ENCODE measurements at regions of chr2 and their contacts with region 1.

Region 1: DNA sequence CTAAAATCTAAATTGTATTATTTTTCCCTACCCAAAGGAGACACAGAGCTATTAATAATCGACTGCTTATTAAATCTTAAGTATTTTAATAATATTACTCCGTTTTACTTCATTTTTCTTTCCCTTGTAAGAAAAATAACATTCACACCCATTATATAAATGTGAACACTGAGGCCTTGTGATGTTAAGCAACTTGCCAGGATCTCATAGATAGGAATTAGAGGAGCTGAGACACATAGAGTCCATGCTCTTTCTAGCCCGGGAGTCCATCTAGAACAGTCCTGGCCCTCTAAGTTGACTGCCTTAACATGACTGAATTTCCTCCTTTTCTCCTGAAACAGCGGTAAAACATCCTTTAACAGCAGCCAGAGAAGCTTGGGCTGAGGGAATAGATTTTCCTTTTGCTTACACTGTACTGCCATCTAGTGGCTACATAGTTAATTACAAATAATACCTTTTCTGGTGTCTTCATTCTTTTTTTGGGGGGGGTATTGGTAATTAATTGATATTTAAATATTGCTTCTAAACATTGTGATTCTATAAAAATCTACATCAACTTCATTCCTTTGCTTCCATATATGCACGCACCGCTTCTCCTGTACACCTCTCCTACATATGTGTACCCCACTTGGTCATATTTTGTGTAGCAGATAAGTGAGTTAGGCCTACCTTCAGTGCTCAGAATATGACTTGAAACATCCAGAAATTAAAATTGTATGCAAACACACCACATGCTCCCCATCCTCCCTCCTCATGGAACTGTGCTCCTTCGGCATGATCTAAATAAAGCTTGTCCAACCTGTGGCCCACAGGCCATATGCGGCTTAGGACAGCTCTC is 125.8 kb upstream of the HNMT start:
- DNase-seq: no peak
- H3K4me3 ChIP-seq: no peak overlapping the region
- H3K27ac ChIP-seq: no peak overlapping the region
- H3K27me3 ChIP-seq: peaks cover 0 to 9% (median 0%) of the 10 kb centered on the region in 45 donors
- CTCF ChIP-seq: peak; percentile 56 to 89 (median 74)

Region 2: DNA sequence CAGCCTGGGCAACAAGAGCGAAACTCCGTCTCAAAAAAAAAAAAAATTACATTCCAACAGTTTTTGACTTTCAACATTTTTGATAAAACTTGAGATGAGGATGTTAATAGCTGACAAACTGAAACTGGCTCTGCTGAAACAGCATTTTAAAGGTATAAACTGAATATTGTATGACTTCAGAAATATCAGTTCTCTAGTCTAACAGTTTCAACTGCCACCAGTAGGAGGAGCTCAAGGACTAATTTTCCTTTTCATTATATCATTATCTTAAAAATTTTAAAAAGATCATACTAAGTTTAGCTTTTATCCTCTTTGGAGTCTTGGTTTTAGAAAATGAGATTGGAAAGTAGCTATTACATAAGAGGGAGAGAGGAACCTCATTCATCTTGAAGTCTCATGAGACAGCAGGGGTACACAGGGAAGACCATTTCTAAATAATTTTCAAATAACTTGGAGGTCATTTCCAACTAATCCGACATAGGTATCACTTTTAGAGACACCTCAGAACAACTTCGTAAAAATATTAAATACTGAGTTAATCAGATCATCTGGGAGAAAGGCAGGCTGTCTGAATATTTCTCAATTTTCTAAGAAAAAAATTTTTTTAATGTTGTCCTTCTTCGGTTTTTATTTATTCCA is 1924.6 kb before region 1 on chr2:
- intact Hi-C with region 1: loop called in 1 of 2 experiments (anchors 5 kb)
- DNase-seq: peak in 1 of 10 donors; percentile 10
- H3K4me3 ChIP-seq: no peak overlapping the region
- H3K27ac ChIP-seq: no peak overlapping the region
- H3K27me3 ChIP-seq: no peaks in the 10 kb centered on the region
- CTCF ChIP-seq: peak; percentile 71 to 94 (median 84)

Region 3: GRCh38 chr2:136423516-136423996 is 1414.9 kb before region 1 on chr2:
- intact Hi-C with region 1: loop called (anchors 5 kb)
- DNase-seq: peak; percentile 43 to 78 (median 62)
- H3K4me3 ChIP-seq: peak overlapping the region; percentile 6 to 72 (median 54)
- H3K27ac ChIP-seq: no peak overlapping the region
- H3K27me3 ChIP-seq: peaks cover 0 to 50% (median 4%) of the 10 kb centered on the region in 45 donors
- CTCF ChIP-seq: peak; percentile 65 to 93 (median 86)

Region 4: GRCh38 chr2:137467246-137467862 is 371.1 kb before region 1 on chr2:
- intact Hi-C with region 1: loop called in 1 of 2 experiments (anchors 10 kb)
- DNase-seq: peak in 5 of 10 donors; percentile 16 to 41 (median 31)
- H3K4me3 ChIP-seq: no peak overlapping the region
- H3K27ac ChIP-seq: no peak overlapping the region
- H3K27me3 ChIP-seq: peaks cover 0 to 14% (median 0%) of the 10 kb centered on the region in 45 donors
- CTCF ChIP-seq: peak; percentile 26 to 73 (median 56)

Region 5: DNA sequence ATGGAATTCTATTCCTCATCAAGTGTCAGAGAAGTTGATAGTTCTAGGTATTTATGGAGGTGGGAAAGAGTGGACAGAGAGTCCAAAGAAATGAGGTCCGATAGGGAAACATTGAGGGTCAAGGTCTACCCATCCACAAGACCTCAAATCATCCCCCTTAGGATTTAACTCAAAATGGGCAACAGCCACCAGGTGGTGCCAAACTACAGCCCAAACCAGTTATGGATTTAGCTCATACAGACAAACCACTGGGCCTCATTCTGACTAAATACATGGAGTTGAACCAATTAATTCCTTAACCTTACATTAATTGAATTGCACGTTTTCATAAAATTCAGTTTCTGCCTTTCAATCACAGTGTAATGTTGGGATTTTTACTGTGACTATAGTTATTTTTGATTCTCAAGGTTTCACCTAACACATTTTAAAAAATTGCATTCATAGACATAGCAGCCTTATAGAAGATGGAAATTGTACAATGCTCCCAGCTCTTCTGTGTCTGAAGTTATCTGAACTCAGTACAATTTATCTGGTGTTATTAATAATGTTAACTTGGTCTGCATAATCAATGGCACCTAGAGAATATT is 27.6 kb after region 1 on chr2:
- intact Hi-C with region 1: no loop called
- DNase-seq: peak in 6 of 10 donors; percentile 12 to 58 (median 47)
- H3K4me3 ChIP-seq: no peak overlapping the region
- H3K27ac ChIP-seq: no peak overlapping the region
- H3K27me3 ChIP-seq: no peaks in the 10 kb centered on the region
- CTCF ChIP-seq: peak in 55 of 56 donors; percentile 42 to 76 (median 60)

Measured in dorsolateral prefrontal cortex (tissue), 120 donors.